ENCODE measurements at regions of chr6 and their contacts with region 1.

Region 1: GRCh38 chr6:35463292-35463691 is 4.9 kb upstream of the RPL10A start:
- DNase-seq: no peak
- H3K4me3 ChIP-seq: no peak overlapping the region
- H3K27ac ChIP-seq: no peak overlapping the region
- H3K4me1 ChIP-seq: peaks cover 23% of the 10 kb centered on the region
- H3K27me3 ChIP-seq: no peaks in the 10 kb centered on the region
- CTCF ChIP-seq: no peak

Region 2: DNA sequence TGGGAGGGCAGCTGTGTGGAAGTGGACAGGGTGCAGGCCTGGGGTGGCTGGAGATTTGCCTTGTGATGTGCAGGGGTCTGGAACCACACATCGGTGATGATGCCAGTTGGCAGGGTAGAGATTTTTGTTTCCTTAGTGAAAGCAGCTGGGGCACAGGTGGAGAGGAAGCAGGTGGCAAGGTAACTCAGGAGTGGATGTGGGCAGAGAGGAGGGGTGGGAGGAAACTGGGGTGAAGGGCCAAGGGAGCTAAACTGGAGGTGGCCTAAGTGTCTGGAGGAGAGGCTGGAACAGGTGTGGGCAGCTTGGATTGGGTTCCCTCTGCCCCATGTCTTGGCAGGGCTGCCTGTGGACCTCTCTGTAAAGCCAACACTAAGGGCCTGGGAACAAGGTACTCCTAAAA is 254.2 kb before region 1 on chr6:
- CTCF ChIA-PET with region 1: no interaction called
- POLR2A ChIA-PET with region 1: interaction called, 26 read pairs
- intact Hi-C with region 1: no loop called
- DNase-seq: no peak
- H3K4me3 ChIP-seq: no peak overlapping the region
- H3K27ac ChIP-seq: no peak overlapping the region
- H3K4me1 ChIP-seq: peaks cover under 1% of the 10 kb centered on the region; the same call in 1 of the 2 replicates
- H3K27me3 ChIP-seq: peaks cover 20% of the 10 kb centered on the region
- CTCF ChIP-seq: no peak

Region 3: GRCh38 chr6:35377002-35377401 is 86.3 kb before region 1 on chr6:
- CTCF ChIA-PET with region 1: interaction called, 14 read pairs
- POLR2A ChIA-PET with region 1: no interaction called
- intact Hi-C with region 1: no loop called
- DNase-seq: no peak
- H3K4me3 ChIP-seq: no peak overlapping the region
- H3K27ac ChIP-seq: no peak overlapping the region
- H3K4me1 ChIP-seq: no peaks in the 10 kb centered on the region
- H3K27me3 ChIP-seq: no peaks in the 10 kb centered on the region
- CTCF ChIP-seq: no peak

Measured in PC-9 (cell line).